K562 (cell line): ENCODE measurements at regions of chr3 and their contacts with region 1.

Region 1: DNA sequence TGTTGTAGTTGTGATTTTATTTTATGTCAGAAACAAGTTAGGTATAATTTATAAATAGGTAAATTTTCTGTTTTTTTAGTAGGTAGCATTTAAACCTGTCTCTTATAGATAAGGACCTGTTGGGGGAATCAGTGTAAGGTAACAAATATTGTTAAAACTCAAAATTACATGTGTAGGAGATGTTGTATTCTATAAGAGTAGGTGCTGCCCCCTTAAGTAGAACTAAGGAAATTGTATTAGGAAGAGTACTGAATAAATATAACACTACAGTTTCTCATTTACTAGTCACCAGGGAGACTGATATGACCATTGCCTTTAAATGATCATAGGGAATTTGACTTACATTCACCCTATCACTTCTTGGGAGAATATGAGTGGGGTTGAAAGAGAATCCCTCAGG is 31.2 kb downstream of the SLC25A36 start:
- DNase-seq: peak in 1 of 4 experiments; percentile 11
- ATAC-seq: peak; percentile 77
- H3K4me3 ChIP-seq: no peak overlapping the region
- H3K27ac ChIP-seq: no peak overlapping the region
- H3K4me1 ChIP-seq: no peaks in the 10 kb centered on the region; a peak in 1 of 5 replicates
- H3K27me3 ChIP-seq: no peaks in the 10 kb centered on the region
- CTCF ChIP-seq: peak in 1 of 3 experiments; percentile 60; a peak in 2 of 6 replicates
- EP300 ChIP-seq: no peak
- POLR2A ChIP-seq: no peak
- RAD21 ChIP-seq: peak in 1 of 2 experiments; percentile 50; a peak in 2 of 4 replicates

Region 2: GRCh38 chr3:140809316-140809715 is 163.5 kb before region 1 on chr3:
- CTCF ChIA-PET with region 1: no interaction called
- POLR2A ChIA-PET with region 1: no interaction called
- in situ Hi-C with region 1: no loop called
- intact Hi-C with region 1: no loop called
- DNase-seq: no peak
- ATAC-seq: no peak
- H3K4me3 ChIP-seq: no peak overlapping the region
- H3K27ac ChIP-seq: no peak overlapping the region
- H3K4me1 ChIP-seq: no peaks in the 10 kb centered on the region
- H3K27me3 ChIP-seq: no peaks in the 10 kb centered on the region
- CTCF ChIP-seq: no peak
- EP300 ChIP-seq: no peak
- POLR2A ChIP-seq: no peak
- RAD21 ChIP-seq: no peak

Region 3: GRCh38 chr3:140898340-140899180 is 74.3 kb before region 1 on chr3:
- CTCF ChIA-PET with region 1: no interaction called
- POLR2A ChIA-PET with region 1: no interaction called
- in situ Hi-C with region 1: no loop called
- intact Hi-C with region 1: loop called (anchors 2 kb)
- DNase-seq: peak; percentile 23 to 48 (median 38)
- ATAC-seq: peak; percentile 72
- H3K4me3 ChIP-seq: no peak overlapping the region
- H3K27ac ChIP-seq: no peak overlapping the region
- H3K4me1 ChIP-seq: no peaks in the 10 kb centered on the region
- H3K27me3 ChIP-seq: no peaks in the 10 kb centered on the region; a peak in 1 of 5 replicates
- CTCF ChIP-seq: peak; percentile 44 to 75 (median 70); a peak in 5 of 6 replicates
- EP300 ChIP-seq: no peak
- POLR2A ChIP-seq: no peak
- RAD21 ChIP-seq: peak; percentile 63 to 65

Region 4: GRCh38 chr3:140922634-140923033 is 50.2 kb before region 1 on chr3:
- CTCF ChIA-PET with region 1: no interaction called
- POLR2A ChIA-PET with region 1: no interaction called
- in situ Hi-C with region 1: no loop called
- intact Hi-C with region 1: loop called (anchors 10 kb)
- DNase-seq: peak in 3 of 4 experiments; percentile 19 to 42 (median 20)
- ATAC-seq: peak; percentile 85
- H3K4me3 ChIP-seq: no peak overlapping the region
- H3K27ac ChIP-seq: no peak overlapping the region
- H3K4me1 ChIP-seq: no peaks in the 10 kb centered on the region
- H3K27me3 ChIP-seq: peaks cover 0 to 4% of the 10 kb centered on the region in 2 experiments; a peak in 3 of 5 replicates
- CTCF ChIP-seq: peak; percentile 39 to 56 (median 55); a peak in 5 of 6 replicates
- EP300 ChIP-seq: no peak
- POLR2A ChIP-seq: no peak
- RAD21 ChIP-seq: peak; percentile 20 to 59; a peak in 3 of 4 replicates